ENCODE measurements at regions of chr3 and their contacts with region 1.

Region 1: DNA sequence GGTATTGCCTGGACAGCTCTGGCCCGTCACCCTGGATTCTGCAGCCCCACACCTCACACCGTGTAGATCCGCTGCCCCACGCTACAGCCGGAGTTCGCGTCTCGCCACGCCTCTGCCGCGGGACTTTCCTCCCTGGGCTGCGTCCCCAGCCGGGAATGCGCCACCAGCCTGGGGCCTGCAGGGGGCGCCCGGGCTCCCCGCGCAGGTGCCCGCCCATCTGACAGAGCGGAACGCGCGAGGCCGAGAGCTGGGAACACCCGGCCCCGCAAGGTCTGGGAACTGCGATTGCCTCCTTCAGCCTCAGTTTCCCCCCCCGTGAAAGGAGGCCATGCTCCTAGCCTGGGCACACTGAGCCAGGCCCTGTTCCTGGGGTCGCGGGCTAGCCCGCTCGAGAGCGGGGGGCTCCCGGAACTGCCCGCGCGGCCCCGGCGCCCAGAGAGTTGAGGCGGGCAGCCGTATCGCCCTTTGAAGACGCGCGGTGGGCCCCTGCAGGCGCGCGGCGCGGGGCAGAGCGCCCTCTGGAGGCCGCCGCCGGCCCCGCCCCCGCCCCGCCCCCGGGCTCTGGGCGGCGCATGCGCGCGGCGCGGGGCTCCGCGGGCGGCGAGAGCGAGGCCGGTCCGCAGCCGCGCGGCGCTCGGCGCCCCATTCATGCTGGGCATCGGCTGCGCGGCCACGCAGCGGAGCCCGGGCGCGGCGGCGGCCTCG is at the start of gene PLXNA1:
- DNase-seq: peak; percentile 97
- H3K4me3 ChIP-seq: peak within 1 kb of the TSS; percentile 84 to 89
- H3K27ac ChIP-seq: peak within 1 kb of the TSS; percentile 53; a peak in 3 of 4 replicates
- H3K4me1 ChIP-seq: peaks cover 10 to 41% of the 10 kb centered on the region in 2 experiments; a peak in 2 of 4 replicates
- H3K27me3 ChIP-seq: no peaks in the 10 kb centered on the region
- CTCF ChIP-seq: peak; percentile 81
- EP300 ChIP-seq: no peak
- RAD21 ChIP-seq: peak; percentile 53
- polyA plus RNA-seq, gene PLXNA1: 48.1 and 48.7 TPM in 2 replicates

Region 2: GRCh38 chr3:126679318-126679751 is 303.3 kb before region 1 on chr3:
- CTCF ChIA-PET with region 1: interaction called, 77 read pairs
- POLR2A ChIA-PET with region 1: no interaction called
- DNase-seq: peak; percentile 88
- H3K4me3 ChIP-seq: peak overlapping the region in 1 of 2 experiments; percentile 29; a peak in 1 of 4 replicates
- H3K27ac ChIP-seq: peak overlapping the region; percentile 9 to 91; a peak in 3 of 4 replicates
- H3K4me1 ChIP-seq: peaks cover 15 to 52% of the 10 kb centered on the region in 2 experiments; a peak in 3 of 4 replicates
- H3K27me3 ChIP-seq: no peaks in the 10 kb centered on the region
- CTCF ChIP-seq: peak; percentile 87
- EP300 ChIP-seq: peak in 1 of 2 experiments; percentile 13; a peak in 1 of 4 replicates
- RAD21 ChIP-seq: peak; percentile 91

Region 3: DNA sequence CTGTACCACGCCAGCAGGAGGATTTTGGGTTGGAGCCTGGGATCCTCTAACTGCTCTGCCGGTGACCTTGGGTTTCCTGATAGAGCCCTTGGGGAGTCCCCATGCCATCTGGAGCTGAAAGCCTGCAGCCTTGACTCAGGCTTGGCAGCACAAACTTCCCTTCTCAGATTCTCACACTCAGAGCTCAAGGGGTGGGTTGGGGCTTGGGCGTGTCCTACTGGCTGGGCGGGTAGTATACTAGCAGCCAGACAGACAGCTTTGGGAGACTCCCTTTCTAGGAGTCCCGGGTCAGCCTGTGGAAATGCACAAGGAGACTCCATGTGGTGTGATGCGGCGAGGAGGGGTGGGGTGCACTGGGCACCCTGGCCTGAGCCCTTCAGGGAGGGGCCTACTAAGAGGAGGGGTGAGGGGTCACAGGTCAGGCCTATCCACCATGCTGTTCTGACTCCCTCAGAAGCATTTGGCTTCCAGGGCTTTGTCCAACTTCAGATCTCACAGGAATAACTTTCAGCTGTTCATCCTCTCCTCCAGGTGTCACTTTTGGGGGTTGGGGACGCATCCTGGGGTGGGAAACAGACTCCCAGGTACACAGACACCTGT is 21.3 kb before region 1 on chr3:
- CTCF ChIA-PET with region 1: interaction called, 15 read pairs
- POLR2A ChIA-PET with region 1: no interaction called
- DNase-seq: no peak
- H3K4me3 ChIP-seq: no peak overlapping the region
- H3K27ac ChIP-seq: peak overlapping the region in 1 of 2 experiments; percentile 71; a peak in 2 of 4 replicates
- H3K4me1 ChIP-seq: peaks cover 0 to 47% of the 10 kb centered on the region in 2 experiments; a peak in 1 of 4 replicates
- H3K27me3 ChIP-seq: no peaks in the 10 kb centered on the region
- CTCF ChIP-seq: no peak
- EP300 ChIP-seq: no peak
- RAD21 ChIP-seq: no peak

Region 4: DNA sequence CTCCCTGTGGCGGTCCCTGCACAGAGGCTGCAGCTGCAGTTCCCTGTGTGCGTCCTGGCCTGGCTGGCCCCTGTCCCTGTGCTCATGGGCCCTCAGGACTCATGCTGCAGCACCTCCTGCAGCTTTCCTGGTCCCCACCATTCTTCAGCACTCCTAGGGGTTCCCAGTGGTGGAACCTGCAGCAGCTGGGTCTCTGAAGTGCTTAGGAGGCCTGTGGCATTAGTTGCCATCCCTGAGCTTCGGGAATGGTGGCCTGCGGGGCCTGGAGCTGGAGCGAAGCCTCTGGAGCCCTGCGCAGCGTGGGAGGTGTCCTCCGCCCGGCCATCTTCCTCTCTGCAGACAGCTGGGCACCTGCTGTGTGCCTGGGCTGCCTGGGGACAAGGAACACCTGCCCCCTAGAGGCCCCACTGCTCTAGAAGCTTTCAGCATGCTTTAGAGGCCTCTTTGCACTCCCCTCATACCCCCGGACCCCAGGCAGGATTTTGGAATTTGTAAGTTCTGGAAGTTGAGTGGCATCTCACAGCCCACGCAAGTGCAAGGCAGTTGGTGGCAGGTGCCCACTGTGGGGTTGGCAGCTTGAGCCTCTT is 13.4 kb after region 1 on chr3:
- CTCF ChIA-PET with region 1: interaction called, 14 read pairs
- POLR2A ChIA-PET with region 1: no interaction called
- DNase-seq: no peak
- H3K4me3 ChIP-seq: no peak overlapping the region
- H3K27ac ChIP-seq: no peak overlapping the region
- H3K4me1 ChIP-seq: peaks cover 4 to 45% of the 10 kb centered on the region in 2 experiments; a peak in 2 of 4 replicates
- H3K27me3 ChIP-seq: no peaks in the 10 kb centered on the region
- CTCF ChIP-seq: peak; percentile 27
- EP300 ChIP-seq: no peak
- RAD21 ChIP-seq: no peak

Region 5: DNA sequence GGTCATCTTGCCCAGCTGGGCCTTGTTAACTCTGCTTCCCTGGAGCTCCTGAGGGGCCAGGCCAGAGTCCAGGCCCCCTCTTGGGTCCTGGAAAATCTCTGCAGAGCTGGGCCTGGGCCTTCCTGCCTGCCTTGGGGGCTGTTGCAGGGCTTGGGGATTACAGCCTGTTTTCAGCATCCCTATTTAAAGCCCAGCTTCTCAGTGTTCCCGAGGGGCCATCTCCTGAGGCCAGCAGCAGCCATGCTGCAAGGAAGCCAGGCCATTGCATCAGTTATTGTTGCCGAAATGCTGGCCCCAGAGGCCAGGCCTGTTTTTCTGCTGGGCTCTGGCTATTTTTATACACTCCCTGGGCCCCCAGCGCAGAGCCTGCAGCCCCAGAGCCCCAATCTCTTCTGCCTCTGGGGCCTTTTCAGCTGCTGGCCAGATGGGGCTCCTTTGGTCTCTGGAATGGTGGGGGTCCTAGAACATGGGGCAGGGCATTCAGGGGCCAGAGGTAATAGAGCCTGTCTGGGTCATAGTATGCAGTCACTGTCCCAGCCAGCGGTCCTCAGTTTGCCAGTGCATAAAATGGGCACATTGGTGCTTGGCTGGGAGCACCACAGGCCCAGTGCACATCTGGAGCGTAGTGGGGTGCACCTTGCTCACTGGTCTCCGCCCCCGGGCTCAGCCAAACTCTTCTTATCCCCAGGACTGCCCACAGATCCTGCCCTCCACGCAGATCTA is 28.8 kb after region 1 on chr3:
- CTCF ChIA-PET with region 1: interaction called, 27 read pairs
- POLR2A ChIA-PET with region 1: no interaction called
- DNase-seq: peak; percentile 84
- H3K4me3 ChIP-seq: no peak overlapping the region; a peak in 1 of 4 replicates
- H3K27ac ChIP-seq: peak overlapping the region in 1 of 2 experiments; percentile 71; a peak in 2 of 4 replicates
- H3K4me1 ChIP-seq: peaks cover 0 to 57% of the 10 kb centered on the region in 2 experiments; a peak in 1 of 4 replicates
- H3K27me3 ChIP-seq: no peaks in the 10 kb centered on the region
- CTCF ChIP-seq: no peak
- EP300 ChIP-seq: peak in 1 of 2 experiments; percentile 72; a peak in 1 of 4 replicates
- RAD21 ChIP-seq: 0 out of 2 replicates have a peak, but pooled peaks have one; percentile 5

Region 6: GRCh38 chr3:127448161-127448561 is 465.5 kb after region 1 on chr3:
- CTCF ChIA-PET with region 1: interaction called, 88 read pairs
- POLR2A ChIA-PET with region 1: no interaction called
- DNase-seq: peak; percentile 52
- H3K4me3 ChIP-seq: no peak overlapping the region
- H3K27ac ChIP-seq: no peak overlapping the region
- H3K4me1 ChIP-seq: peaks cover 0 to 11% of the 10 kb centered on the region in 2 experiments; a peak in 1 of 4 replicates
- H3K27me3 ChIP-seq: no peaks in the 10 kb centered on the region
- CTCF ChIP-seq: no peak
- EP300 ChIP-seq: no peak
- RAD21 ChIP-seq: peak; percentile 44

Region 7: DNA sequence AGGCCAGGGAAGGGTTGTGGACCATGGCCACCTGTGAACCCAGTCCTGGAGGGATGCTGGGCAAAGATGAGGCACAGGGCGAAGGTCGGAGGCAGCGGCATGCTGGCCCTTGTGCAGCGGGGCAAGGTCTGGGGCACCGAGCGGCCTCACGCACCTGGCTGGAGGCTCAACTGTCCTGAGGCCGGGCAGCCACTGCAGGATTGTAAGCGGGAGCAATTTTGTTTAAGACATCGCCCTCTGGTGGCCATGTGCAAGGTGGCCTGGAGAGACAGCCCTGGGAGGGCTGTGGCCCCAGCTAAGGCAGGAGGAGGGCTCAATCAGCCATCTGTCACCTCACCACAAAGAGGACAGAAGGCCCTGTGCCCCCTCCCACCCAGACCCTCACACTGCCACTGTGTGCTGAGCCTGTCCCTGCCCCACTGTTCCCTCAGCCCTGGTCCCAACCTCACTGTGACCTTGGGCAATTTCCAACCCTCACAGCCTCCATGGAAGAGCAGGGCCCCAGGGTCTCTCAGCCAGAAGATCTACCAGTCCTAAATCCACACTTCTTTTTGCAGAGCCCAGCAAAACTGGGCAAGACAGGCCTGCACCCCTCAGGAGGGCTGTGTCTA is 561.7 kb after region 1 on chr3:
- CTCF ChIA-PET with region 1: interaction called, 19 read pairs
- POLR2A ChIA-PET with region 1: no interaction called
- DNase-seq: peak; percentile 91
- H3K4me3 ChIP-seq: no peak overlapping the region; a peak in 1 of 4 replicates
- H3K27ac ChIP-seq: no peak overlapping the region
- H3K4me1 ChIP-seq: peaks cover 0 to 29% of the 10 kb centered on the region in 2 experiments; a peak in 1 of 4 replicates
- H3K27me3 ChIP-seq: no peaks in the 10 kb centered on the region
- CTCF ChIP-seq: peak; percentile 75
- EP300 ChIP-seq: no peak
- RAD21 ChIP-seq: peak; percentile 81